Activated CD4-positive, alpha-beta memory T cell treated with anti-CD3 and anti-CD28 coated beads, Interleukin-2, amount 10 ng/mL, durations not matched to agents 7 days and 5 days (primary cell): ENCODE measurements at regions of chr6 and their contacts with region 1.

Region 1: DNA sequence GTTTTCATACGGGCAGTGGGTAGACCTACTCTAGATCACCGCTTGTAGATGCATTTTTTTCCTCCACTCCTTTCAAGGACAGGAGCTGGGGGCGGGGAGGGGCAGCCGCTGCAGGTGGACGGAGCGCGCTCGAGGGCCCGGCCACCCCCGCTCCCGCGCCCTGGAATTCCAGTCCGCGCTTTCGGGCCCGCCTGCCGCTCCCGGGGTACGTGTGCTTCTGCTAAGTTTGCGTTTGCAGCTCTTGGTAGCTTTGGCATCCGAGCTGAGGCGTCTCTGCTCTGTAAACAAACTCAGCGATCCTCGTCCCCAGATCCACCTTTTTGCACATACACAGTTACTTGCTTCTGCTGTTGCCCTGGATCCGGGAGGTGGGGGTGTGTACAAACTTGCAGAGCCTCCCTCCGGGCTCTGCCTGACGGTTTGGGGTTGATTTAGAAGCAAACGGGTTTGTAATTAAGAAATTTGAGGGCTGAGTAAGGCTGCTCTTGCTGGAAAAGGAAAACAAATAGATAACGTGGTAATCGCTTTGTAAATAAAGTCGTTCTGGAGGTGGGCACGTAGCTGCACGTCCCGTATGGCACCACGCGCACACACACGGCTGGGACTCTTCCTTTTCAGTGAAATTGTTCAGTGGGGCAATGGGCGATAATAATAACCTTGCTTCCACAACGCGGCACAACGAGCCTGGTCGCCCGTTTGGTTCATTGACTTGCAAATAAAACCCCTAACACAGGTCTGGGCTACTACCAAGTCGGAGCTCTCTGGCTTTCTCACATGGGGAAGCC is 976 bp upstream of the CITED2 start:
- DNase-seq: peak; percentile 86
- H3K4me3 Mint-ChIP-seq: peak overlapping the region; percentile 99
- H3K27ac Mint-ChIP-seq: peak overlapping the region; percentile 90
- H3K4me1 Mint-ChIP-seq: peaks cover 45% of the 10 kb centered on the region
- H3K27me3 Mint-ChIP-seq: no peaks in the 10 kb centered on the region

Region 2: GRCh38 chr6:139124887-139125672 is 250.3 kb before region 1 on chr6:
- CTCF ChIA-PET with region 1: interaction called, 12 read pairs
- POLR2A ChIA-PET with region 1: interaction called, 39 read pairs
- DNase-seq: peak; percentile 87
- H3K4me3 Mint-ChIP-seq: peak overlapping the region; percentile 49
- H3K27ac Mint-ChIP-seq: peak overlapping the region; percentile 95
- H3K4me1 Mint-ChIP-seq: peaks cover 41% of the 10 kb centered on the region
- H3K27me3 Mint-ChIP-seq: no peaks in the 10 kb centered on the region

Region 3: GRCh38 chr6:139153855-139154254 is 221.6 kb before region 1 on chr6:
- CTCF ChIA-PET with region 1: no interaction called
- POLR2A ChIA-PET with region 1: interaction called, 10 read pairs
- DNase-seq: no peak
- H3K4me3 Mint-ChIP-seq: no peak overlapping the region
- H3K27ac Mint-ChIP-seq: peak overlapping the region; percentile 23
- H3K4me1 Mint-ChIP-seq: peaks cover 77% of the 10 kb centered on the region
- H3K27me3 Mint-ChIP-seq: no peaks in the 10 kb centered on the region

Region 4: GRCh38 chr6:139262519-139263300 is 112.7 kb before region 1 on chr6:
- CTCF ChIA-PET with region 1: no interaction called
- POLR2A ChIA-PET with region 1: interaction called, 11 read pairs
- DNase-seq: peak; percentile 32
- H3K4me3 Mint-ChIP-seq: peak overlapping the region; percentile 46
- H3K27ac Mint-ChIP-seq: peak overlapping the region; percentile 74
- H3K4me1 Mint-ChIP-seq: peaks cover 26% of the 10 kb centered on the region
- H3K27me3 Mint-ChIP-seq: no peaks in the 10 kb centered on the region

Region 5: GRCh38 chr6:139364302-139364981 is 11.0 kb before region 1 on chr6:
- CTCF ChIA-PET with region 1: interaction called, 26 read pairs
- POLR2A ChIA-PET with region 1: interaction called, 20 read pairs
- DNase-seq: no peak
- H3K4me3 Mint-ChIP-seq: no peak overlapping the region
- H3K27ac Mint-ChIP-seq: no peak overlapping the region
- H3K4me1 Mint-ChIP-seq: peaks cover 41% of the 10 kb centered on the region
- H3K27me3 Mint-ChIP-seq: no peaks in the 10 kb centered on the region

Region 6: DNA sequence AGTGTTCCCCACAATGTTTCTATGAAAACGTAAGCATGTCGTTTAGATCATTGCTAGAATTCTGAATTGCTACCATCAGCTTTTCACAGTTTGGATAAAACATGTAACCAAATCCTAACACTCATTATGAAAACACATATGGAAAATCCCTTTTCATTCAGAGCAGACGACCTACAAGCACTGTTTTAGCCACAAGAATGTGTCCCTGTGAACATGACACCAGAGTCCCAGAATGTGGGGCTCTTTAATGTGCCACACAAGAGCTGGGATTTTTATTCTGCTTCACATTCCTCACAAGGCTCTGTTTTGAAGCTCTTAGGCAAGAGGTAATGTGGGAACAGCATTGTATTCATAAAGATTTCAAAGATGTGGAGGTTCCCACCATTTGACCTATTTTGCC is 140.1 kb after region 1 on chr6:
- CTCF ChIA-PET with region 1: interaction called, 3 read pairs
- POLR2A ChIA-PET with region 1: interaction called, 10 read pairs
- DNase-seq: no peak
- H3K4me3 Mint-ChIP-seq: no peak overlapping the region
- H3K27ac Mint-ChIP-seq: no peak overlapping the region
- H3K4me1 Mint-ChIP-seq: peaks cover 20% of the 10 kb centered on the region
- H3K27me3 Mint-ChIP-seq: no peaks in the 10 kb centered on the region

Region 7: DNA sequence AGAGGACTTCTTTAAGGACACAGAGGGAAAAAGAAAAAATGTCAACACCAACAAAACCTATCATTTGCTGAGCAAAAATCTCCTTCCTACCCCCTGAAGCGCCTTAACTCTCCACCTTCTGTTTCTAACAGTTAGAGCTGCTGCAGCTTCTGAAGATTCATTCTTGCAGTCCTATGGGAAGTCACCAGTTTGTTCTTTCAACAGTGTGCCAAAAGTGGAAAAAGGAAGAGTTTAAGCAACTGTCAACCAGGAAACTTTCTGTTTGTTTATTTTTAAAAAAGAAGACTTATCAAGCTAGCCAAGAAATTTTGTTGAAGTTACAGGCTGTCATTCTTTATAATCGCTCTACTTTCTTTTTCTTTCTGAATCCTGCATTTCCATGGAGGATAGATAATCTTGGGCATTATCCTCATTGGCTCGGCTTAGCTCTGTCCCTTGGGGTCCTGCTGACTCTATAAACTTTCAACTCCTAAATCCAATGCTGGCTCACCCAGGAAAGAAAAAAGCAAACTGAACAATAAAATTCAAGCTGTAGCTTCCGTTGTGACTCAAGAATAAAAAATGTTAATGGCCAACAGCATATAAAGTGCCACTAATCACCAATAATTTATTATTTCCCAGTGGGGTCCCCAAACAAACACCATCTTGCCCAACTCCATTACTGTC is 171.8 kb after region 1 on chr6:
- CTCF ChIA-PET with region 1: no interaction called
- POLR2A ChIA-PET with region 1: interaction called, 12 read pairs
- DNase-seq: no peak
- H3K4me3 Mint-ChIP-seq: no peak overlapping the region
- H3K27ac Mint-ChIP-seq: no peak overlapping the region
- H3K4me1 Mint-ChIP-seq: peaks cover 35% of the 10 kb centered on the region
- H3K27me3 Mint-ChIP-seq: peaks cover 3% of the 10 kb centered on the region